Activated CD4-positive, alpha-beta T cell treated with anti-CD3 and anti-CD28 coated beads, Interleukin-2, amount 10 ng/mL, durations not matched to agents 7 days and 5 days (primary cell): ENCODE measurements at regions of chr5 and their contacts with region 1.

Region 1: DNA sequence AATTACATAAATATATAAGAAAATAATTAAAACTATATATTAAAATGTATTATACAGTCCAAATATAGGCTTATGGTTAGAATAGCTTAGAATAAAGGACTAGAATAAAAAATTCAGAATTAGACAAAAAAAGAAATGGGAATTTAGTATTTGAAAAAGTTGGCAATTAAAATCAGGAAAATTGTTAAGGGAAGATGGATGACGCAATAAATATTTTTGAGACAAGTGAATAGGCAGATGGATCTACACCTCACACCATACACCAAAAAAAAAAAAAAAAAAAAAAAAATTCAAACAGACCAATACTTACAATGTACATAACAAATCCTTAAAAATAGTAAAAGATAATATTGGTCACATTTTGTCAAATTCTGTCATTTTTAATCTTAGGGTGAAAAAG is 200.7 kb downstream of the TMEM232 start:
- DNase-seq: no peak
- H3K4me3 Mint-ChIP-seq: no peak overlapping the region
- H3K27ac Mint-ChIP-seq: no peak overlapping the region
- H3K4me1 Mint-ChIP-seq: no peaks in the 10 kb centered on the region
- H3K27me3 Mint-ChIP-seq: peaks cover 2% of the 10 kb centered on the region

Region 2: DNA sequence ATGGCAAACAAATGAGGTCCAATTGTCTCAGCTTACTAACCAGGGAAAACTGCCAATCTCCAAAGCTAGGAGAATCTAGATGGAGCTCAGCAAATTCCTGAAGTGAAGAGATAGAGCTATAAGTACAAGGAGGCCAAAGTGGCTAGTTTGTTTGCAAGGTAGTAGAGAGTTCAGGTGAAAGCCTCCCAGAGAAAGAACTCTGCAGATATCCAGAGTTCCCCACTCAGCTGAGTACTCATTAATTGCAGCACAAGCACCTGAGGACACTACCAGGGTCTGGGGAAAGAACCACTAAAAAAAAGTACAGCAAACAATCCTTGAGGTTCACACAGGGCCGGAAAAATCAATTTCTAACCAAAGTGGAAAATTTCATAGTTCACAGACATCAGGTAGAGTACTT is 50.2 kb before region 1 on chr5:
- CTCF ChIA-PET with region 1: no interaction called
- POLR2A ChIA-PET with region 1: interaction called, 24 read pairs
- DNase-seq: no peak
- H3K4me3 Mint-ChIP-seq: no peak overlapping the region
- H3K27ac Mint-ChIP-seq: no peak overlapping the region
- H3K4me1 Mint-ChIP-seq: no peaks in the 10 kb centered on the region
- H3K27me3 Mint-ChIP-seq: no peaks in the 10 kb centered on the region